ENCODE measurements at regions of chr14 and their contacts with region 1.

Region 1: DNA sequence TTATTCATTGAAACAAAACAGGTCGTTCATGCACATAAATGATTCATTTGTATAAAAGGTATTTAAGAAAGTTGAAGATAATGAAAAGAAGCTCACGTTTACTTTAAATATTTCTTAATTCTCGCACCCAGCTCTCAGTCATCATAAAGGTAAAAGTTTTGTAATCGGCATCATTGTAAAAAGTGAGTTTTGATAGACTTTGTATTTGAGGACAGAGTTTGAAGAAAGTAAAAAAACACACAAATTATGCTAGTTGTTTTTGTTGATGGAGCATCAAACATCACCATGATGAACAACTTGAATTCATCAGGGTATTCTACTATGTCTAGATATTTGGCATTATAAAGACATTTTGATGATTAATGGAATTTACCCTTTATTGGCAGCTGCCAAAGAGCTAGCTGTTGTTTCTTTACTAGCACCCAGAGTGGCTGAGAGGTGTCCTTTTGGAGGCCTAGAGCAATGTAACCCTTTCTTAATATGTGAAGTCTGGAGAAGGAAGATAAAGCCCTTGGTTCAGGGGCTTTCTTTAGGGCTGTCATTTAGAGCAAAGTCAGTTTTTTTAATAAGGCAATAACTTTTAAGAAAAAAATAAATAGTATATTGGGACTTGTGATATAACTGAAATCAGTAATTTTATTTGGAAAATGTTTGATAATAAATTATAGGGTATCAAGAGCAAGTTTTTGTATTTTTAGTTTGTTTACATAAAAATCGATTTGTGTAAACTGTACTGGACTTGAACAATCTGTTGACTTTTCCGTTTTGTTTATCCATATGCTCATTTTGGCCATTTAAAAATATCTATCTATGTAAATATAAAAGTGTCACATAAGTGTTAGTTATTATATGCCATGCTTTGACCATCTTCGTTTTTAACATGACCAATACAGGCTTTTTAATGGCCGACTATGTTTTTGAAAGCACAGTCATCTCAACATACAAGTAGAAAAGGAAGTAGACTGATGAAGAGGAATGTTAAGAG is 7.4 kb downstream of the GLRX5 start:
- DNase-seq: no peak
- ATAC-seq: no peak
- H3K4me3 ChIP-seq: no peak overlapping the region
- H3K4me3 Mint-ChIP-seq: no peak overlapping the region
- H3K27ac ChIP-seq: no peak overlapping the region
- H3K27ac Mint-ChIP-seq: no peak overlapping the region
- H3K4me1 ChIP-seq: peaks cover 0 to 4% of the 10 kb centered on the region in 2 experiments
- H3K4me1 Mint-ChIP-seq: peaks cover 35 to 40% (median 39%) of the 10 kb centered on the region in 3 donors
- H3K27me3 ChIP-seq: no peaks in the 10 kb centered on the region
- H3K27me3 Mint-ChIP-seq: no peaks in the 10 kb centered on the region

Region 2: DNA sequence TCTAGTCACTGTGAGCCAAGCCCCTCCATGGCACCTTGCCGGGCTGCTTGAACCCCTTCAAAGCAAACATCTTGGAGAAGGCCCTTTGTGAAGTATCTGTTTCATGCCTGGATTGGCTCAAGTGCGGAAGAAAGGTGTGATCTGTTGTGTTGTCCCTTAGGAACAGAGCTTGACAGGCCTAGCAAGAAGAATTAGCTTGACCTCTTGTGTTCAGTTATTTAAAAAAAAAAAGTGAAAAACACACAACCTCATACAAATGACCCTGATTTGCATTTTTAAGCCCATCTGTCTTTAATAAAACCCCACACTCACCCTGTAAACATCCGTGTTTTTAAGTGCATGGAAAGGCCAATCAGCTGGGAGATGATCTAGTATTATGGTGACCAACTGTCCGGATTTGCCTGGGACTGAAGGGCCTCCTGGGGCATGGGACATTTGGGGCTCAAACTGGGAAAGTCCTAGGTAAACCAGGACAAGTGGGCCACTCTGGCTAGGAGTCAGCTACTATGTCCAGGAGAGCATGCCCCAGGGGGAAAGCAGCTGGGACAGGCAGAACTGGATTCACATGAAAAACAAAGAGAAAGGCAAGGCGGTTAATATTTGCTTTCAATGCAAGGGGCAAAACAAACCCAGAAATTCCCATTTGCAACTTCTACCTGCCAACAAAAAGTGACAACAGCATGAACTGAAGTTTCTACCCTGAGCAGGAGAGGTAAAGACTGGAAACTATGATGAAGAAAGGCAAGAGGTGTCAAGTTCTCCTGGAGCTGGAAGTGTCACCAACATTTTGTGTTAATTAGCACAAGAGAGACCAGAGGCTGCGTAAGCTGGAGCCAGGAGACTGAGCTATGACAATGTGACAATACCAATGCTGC is 301.1 kb before region 1 on chr14:
- CTCF ChIA-PET with region 1: interaction called in 1 of 2 experiments, 11 read pairs
- POLR2A ChIA-PET with region 1: no interaction called
- DNase-seq: no peak
- ATAC-seq: no peak
- H3K4me3 ChIP-seq: no peak overlapping the region
- H3K4me3 Mint-ChIP-seq: no peak overlapping the region
- H3K27ac ChIP-seq: no peak overlapping the region
- H3K27ac Mint-ChIP-seq: no peak overlapping the region
- H3K4me1 ChIP-seq: no peaks in the 10 kb centered on the region
- H3K4me1 Mint-ChIP-seq: no peaks in the 10 kb centered on the region
- H3K27me3 ChIP-seq: peaks cover 0 to 8% of the 10 kb centered on the region in 2 experiments
- H3K27me3 Mint-ChIP-seq: no peaks in the 10 kb centered on the region